Activated CD4-positive, alpha-beta T cell treated with anti-CD3 and anti-CD28 coated beads, Interleukin-2, amount 10 ng/mL, durations not matched to agents 24 days and 14 days (primary cell): ENCODE measurements at regions of chr12 and their contacts with region 1.

Region 1: DNA sequence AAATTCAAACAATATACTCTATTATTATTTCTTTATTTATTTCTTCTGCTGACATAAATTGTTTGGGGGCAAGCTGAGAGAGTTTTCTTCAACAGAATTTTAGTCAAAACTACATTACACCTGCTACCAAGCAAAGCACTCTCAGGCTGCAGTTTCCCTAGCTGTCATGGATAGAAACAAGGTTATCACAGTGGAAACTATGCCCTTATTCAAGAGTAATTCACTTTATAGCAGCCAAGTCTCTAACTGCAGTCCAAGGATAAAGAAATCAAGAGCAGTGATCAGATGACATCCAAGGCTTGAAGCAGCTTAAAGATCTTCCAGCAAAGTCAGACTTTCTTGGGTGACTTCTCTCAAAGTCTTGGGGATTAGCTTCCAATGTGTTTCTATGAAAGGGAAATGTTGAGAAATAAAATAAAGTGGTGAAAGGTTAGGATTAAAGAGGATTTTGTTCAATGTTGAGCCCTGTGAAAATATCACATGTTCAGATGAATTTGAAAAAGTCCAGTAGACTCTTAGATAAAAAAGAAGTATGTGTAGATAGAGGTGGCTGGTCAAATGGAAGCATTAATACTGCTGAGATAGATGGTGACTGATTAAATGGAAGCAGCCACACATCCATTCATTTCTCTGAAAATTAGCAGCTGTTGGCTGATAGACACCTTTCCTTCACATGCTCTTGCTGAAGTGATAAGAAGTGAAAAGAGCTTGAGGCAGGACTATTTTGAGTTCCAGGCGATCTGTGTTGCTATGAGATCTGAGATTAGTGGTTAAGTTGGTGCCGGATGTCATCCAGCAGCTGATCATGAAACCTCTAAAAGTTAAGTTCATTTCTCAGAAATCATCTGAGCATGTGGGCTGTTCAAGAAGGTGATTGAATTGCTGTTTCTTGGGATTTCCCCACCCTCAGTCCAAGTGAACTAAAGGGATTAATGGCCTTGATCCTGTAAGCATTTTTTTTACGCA is 257.8 kb upstream of the BTG1 start:
- DNase-seq: peak; percentile 93
- H3K4me3 Mint-ChIP-seq: peak overlapping the region; percentile 69
- H3K27ac Mint-ChIP-seq: peak overlapping the region; percentile 94
- H3K4me1 Mint-ChIP-seq: peaks cover 78% of the 10 kb centered on the region
- H3K27me3 Mint-ChIP-seq: no peaks in the 10 kb centered on the region

Region 2: DNA sequence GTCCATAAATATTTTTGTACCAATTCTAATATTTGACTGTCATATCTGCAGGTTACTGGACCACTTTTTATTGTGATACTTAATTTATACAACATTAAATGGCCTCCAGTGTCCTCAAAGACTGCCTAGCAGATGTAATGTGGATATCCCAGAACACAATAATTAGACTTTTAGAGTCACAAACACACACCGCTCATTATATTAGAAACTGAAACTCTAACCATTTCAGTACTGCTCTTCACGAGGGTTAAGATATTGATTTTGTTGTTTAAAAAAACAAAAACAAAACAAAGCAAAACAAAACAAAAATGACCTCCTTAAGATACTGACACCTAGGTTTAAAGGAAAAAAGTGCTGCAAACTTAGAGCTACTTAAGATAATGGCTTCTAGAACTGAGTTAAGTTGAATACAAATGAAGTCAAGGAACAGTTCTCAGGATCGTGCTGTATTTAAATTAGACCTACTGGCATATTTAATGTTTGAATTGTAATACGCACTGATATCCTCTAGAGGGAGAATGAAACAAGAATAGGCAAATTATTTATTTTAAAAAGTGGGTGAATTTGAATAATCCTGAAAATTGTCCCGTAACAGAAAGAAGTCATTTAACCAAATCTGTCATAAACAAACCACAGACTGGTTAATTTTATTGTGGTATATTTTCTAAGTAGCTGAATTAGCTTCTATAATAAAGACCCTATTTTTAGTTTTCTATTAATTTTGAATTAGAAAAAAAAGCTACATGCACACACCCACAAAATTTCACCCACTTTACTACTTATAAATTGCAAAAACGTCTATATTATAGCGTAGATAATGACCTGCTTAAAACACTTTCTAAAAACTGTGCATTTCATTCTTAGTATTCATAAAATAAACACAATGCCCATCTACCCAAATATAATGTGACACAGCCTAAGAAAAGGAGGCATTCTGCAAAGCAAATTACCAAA is 825.6 kb before region 1 on chr12:
- intact Hi-C with region 1: loop called (anchors 5 kb)
- DNase-seq: no peak
- H3K4me3 Mint-ChIP-seq: peak overlapping the region; percentile 74
- H3K27ac Mint-ChIP-seq: no peak overlapping the region
- H3K4me1 Mint-ChIP-seq: peaks cover 5% of the 10 kb centered on the region
- H3K27me3 Mint-ChIP-seq: peaks cover 3% of the 10 kb centered on the region

Region 3: DNA sequence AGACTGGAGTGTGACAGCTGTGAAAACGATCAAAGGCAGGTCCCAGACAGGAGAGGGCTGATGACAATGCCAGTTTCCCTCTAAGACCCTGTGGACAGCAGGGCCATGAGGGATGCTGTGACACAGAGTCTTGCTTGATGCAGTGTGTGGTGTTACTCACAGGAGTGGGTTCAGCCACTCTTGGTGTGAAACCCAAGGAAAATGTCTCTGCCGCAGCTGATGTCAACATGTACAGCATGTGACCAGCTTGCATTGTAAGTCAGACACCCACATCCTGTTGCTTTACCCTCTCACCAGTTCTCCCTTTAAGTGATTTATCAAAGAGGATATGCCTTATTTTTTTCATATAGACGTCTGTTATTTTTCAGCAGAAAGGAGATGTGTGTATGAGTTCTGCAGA is 526.5 kb before region 1 on chr12:
- intact Hi-C with region 1: loop called (anchors 5 kb)
- DNase-seq: peak; percentile 95
- H3K4me3 Mint-ChIP-seq: peak overlapping the region; percentile 80
- H3K27ac Mint-ChIP-seq: peak overlapping the region; percentile 97
- H3K4me1 Mint-ChIP-seq: peaks cover 46% of the 10 kb centered on the region
- H3K27me3 Mint-ChIP-seq: no peaks in the 10 kb centered on the region

Region 4: DNA sequence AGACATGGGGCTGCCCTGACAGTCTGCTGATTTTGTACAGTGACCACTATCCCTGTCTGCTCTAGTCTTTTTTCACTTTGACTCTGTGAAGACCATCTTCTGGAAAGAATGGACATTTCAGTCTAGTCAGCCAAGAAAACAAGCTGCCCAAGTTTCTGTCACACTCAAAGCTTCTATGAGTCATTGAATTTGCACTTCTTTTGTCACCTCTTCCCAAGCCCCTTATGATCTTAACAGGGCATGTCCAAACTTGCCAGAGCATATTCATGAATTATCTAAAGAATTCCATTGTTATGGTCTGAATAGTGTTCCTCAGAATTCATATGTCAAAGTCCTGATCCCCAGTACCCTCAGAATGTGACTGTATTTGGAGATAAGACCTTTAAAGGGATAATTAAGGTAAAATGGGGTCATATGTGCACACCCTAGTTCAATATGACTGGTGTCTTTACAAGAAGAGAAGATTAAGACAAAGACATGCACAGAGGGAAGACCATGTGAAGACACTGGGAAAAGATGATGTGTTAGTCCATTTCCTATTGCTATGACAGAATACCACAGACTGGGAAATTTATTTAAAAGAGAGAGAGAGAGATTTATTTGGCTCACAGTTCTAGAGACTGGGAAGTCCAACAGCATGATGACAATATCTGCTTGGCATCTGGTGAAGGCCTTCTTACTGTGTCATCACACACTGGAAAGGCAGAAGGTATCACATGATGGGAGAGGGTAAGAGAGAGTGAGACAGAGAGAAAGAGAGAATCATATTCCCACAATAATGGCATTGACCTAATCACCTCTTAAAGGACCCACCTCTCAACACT is 500.4 kb before region 1 on chr12:
- intact Hi-C with region 1: no loop called
- DNase-seq: no peak
- H3K4me3 Mint-ChIP-seq: no peak overlapping the region
- H3K27ac Mint-ChIP-seq: no peak overlapping the region
- H3K4me1 Mint-ChIP-seq: peaks cover 8% of the 10 kb centered on the region
- H3K27me3 Mint-ChIP-seq: no peaks in the 10 kb centered on the region

Region 5: DNA sequence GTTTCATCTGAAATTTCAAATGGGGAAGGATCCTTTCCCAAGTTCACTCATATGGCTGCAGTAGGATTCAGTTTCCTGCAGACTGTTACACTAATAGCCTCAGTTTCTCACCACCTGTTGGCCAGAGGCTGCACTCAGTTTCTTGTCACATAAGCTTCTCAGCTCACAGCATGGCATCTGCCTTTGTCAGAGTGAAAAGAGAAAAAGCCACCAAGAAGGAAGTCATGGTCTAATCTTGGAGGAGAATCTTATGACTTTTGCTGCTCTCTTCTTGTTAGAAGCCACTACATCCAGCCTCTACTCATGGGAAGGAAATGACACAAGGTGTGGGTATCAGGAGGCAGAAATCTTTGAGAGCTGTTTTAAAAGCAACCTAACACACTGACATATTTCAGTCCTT is 218.4 kb before region 1 on chr12:
- intact Hi-C with region 1: loop called (anchors 1 kb)
- DNase-seq: peak; percentile 85
- H3K4me3 Mint-ChIP-seq: peak overlapping the region; percentile 59
- H3K27ac Mint-ChIP-seq: peak overlapping the region; percentile 77
- H3K4me1 Mint-ChIP-seq: peaks cover 51% of the 10 kb centered on the region
- H3K27me3 Mint-ChIP-seq: no peaks in the 10 kb centered on the region

Region 6: DNA sequence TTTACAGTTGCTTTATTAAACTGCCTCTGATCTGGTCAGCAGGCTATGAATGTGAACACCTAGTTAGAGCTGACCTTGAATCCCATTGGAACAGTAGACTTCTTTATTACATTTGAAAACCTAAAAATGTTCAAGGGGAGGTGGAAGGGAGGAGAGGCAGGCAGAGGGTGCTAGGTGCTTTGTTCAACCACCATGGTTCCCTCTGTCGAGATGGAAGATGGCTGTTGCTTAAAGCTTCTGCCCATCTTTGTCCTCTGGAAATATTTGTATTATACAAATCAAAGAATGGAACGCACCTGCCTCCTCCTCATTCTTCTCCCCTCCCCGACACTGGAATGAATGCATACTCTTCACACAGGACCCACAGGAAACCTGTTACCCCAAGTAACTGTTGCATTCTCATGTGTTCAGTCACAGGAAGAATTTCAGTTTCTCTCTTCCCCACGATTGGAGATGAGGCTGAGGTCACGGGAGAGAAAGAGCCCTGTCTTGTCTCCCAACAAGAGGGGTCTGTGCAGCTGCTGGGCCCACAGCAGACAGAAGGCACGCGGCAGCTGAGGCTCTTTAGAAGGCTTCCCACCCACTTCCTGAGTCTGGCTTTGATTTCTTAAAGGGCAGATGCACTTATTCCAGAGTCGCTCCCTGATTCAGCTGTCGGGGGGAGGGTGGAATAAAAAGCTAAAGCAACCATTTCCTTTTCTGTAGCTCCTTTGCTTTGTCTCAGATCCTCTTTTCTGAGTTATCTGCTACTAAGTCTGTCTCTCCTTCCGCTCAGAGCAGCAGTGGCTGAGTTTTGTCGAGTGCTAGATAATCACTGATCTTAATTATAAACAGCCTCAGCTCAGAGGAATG is 40.0 kb before region 1 on chr12:
- intact Hi-C with region 1: loop called (anchors 1 kb)
- DNase-seq: peak; percentile 79
- H3K4me3 Mint-ChIP-seq: peak overlapping the region; percentile 75
- H3K27ac Mint-ChIP-seq: peak overlapping the region; percentile 64
- H3K4me1 Mint-ChIP-seq: peaks cover 41% of the 10 kb centered on the region
- H3K27me3 Mint-ChIP-seq: no peaks in the 10 kb centered on the region

Region 7: GRCh38 chr12:92378682-92379479 is 24.6 kb before region 1 on chr12:
- intact Hi-C with region 1: no loop called
- DNase-seq: peak; percentile 76
- H3K4me3 Mint-ChIP-seq: peak overlapping the region; percentile 19
- H3K27ac Mint-ChIP-seq: peak overlapping the region; percentile 52
- H3K4me1 Mint-ChIP-seq: peaks cover 34% of the 10 kb centered on the region
- H3K27me3 Mint-ChIP-seq: no peaks in the 10 kb centered on the region

Region 8: DNA sequence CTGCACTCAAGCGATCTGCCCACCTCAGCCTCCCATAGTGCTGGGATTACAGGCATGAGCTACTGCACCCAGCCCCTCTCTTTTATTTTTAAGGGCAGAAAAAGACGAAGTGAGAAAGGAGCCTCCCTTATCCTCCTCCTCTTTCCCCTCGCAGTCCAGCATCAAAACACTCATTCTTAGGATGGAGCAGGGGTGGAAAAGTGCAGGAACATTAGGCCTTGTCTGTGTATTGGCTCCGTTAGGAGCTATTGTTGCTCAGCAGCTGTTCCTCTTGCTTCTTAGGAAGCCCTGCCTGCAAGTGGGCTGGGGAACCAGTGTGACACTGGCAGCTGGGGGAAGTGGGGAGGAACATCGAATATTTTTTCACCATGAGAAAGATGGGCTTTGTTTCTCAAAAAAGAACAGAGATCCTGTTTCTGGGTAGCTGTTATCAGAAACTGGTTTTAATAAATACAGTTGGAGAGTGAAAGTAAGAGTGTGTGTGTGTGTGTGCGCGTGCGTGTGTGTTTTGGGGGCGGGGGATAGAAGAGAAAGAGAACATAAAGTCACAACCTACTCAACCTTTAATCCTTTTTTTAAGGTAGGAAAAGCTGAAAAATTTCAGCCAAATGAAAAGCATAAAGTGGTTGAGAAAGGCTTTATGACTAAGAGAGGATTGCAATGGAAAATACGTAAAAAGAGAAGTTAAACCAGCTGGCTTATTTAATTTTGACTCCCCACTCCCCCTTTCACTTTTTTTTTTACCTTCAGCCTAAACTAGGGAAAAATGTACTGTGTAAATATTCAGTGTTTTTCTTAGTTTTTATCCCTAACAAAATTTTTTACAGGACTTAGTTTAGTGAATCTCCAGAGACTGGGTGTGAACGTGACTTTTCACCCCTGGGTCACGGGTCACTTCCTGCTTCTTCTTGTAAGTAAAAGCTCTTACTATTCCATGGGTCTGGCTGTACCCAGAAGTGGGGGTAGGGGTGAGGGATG is 102.0 kb after region 1 on chr12:
- intact Hi-C with region 1: loop called (anchors 1 kb)
- DNase-seq: peak; percentile 83
- H3K4me3 Mint-ChIP-seq: peak overlapping the region; percentile 89
- H3K27ac Mint-ChIP-seq: peak overlapping the region; percentile 98
- H3K4me1 Mint-ChIP-seq: peaks cover 42% of the 10 kb centered on the region
- H3K27me3 Mint-ChIP-seq: no peaks in the 10 kb centered on the region

Region 9: DNA sequence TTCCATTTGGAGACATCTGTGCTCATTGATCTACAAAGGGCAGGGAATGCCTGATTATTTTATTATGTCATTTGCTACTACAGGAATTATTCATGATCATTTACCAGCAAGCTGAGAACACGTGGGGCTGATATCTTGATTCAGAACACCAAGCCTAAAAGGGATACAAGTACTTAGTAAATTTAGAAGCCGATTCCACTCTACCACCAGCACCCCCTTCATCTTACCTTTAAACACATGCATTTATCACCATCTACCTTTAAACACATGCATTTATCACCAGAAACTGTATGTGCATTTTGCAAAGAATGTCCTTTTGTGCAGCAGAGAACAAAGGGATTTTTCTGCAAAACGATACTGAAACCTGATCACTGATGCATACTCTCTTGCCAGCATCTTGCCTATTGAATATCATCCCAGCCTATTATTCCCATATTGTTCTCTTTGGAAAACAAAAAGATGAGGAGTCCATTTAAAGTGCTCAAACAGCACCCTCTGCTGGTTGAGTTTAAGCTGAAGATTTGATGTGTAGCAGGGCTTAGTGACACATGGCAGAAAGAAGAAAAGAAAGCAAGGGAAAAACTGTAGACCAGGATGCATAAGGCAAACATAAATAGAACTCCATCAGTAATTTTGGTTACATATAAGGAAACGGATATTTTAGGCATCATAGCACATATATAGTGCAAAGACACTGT is 166.7 kb after region 1 on chr12:
- intact Hi-C with region 1: loop called (anchors 2 kb)
- DNase-seq: peak; percentile 87
- H3K4me3 Mint-ChIP-seq: no peak overlapping the region
- H3K27ac Mint-ChIP-seq: no peak overlapping the region
- H3K4me1 Mint-ChIP-seq: peaks cover 21% of the 10 kb centered on the region
- H3K27me3 Mint-ChIP-seq: no peaks in the 10 kb centered on the region

Region 10: GRCh38 chr12:92879698-92880305 is 476.3 kb after region 1 on chr12:
- intact Hi-C with region 1: no loop called
- DNase-seq: no peak
- H3K4me3 Mint-ChIP-seq: no peak overlapping the region
- H3K27ac Mint-ChIP-seq: no peak overlapping the region
- H3K4me1 Mint-ChIP-seq: peaks cover 17% of the 10 kb centered on the region
- H3K27me3 Mint-ChIP-seq: no peaks in the 10 kb centered on the region